ENCODE measurements at regions of chr9 and their contacts with region 1.

Region 1: GRCh38 chr9:90921111-90921510 is 119.5 kb downstream of the SYK start:
- DNase-seq: peak; percentile 80 to 93
- ATAC-seq: peak; percentile 85
- H3K4me3 ChIP-seq: no peak overlapping the region
- H3K27ac ChIP-seq: peak overlapping the region in 1 of 2 donors; percentile 90
- H3K4me1 ChIP-seq: peaks cover 3 to 5% of the 10 kb centered on the region in 2 donors
- H3K27me3 ChIP-seq: no peaks in the 10 kb centered on the region

Region 2: DNA sequence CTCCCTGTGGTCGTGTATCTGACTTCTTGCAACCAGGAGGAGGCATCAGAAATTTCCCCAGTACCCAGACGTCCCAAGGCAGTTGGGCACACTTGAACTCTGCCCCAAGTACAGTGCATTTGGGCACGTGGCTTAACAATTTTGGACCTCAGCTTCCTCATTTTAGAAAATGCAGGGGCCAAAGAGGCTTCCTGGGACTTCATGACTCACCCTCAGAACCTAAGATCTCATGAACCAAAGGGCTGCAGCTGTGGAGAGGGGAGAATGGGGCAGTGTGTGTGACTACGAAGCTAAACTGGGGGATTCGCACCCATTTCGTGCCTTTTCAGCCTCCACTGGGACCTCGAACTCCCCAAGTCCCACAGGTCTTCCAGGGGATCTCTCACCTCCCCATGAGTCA is 60.3 kb before region 1 on chr9:
- intact Hi-C with region 1: no loop called
- DNase-seq: peak in 1 of 2 donors; percentile 60
- ATAC-seq: no peak
- H3K4me3 ChIP-seq: no peak overlapping the region
- H3K27ac ChIP-seq: no peak overlapping the region
- H3K4me1 ChIP-seq: no peaks in the 10 kb centered on the region
- H3K27me3 ChIP-seq: no peaks in the 10 kb centered on the region

Region 3: DNA sequence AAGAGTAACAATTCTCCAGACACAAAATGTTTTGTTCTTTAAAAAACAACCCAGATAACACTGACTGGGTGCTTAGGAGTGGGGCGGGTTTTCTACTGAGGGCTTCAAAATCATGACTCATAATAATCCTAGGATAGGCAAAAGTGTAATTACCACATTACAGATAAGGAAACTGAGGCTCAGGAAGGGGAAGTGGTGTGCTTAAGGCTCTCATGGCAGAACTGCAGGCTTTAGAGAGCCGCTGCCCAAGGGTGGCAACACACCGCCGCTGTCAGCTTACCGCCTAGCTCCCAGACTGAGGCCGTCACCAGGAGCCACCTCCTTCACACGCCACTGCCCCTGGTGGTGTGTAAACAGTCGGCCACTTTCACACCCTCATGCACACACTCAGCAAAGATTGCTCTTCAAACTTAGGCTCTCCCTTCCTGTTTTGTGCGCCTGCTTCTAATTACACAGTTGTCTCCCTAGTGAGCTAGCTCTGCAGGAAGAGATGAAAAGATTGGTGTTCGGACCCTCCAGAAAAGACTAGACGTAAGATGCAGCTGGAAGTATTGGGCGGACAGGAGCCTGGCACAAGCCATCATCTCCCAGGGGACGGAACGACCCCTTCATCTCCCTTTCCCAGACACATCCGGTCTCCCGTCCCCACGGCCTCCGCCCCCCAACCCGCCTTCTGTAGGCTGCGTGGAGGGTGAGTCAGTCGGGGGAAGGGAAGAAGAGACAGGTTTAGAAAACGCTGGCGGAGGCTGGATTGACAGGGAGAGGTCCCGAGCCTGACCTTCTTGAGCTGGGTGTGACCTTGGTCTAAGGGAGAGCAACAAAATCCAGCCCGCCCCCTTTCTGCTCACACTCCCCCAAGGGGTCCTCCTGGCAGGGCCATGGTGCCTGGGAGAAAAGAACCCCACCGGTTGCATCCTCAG is 43.2 kb after region 1 on chr9:
- intact Hi-C with region 1: loop called (anchors 2 to 5 kb)
- DNase-seq: peak; percentile 65 to 83
- ATAC-seq: peak; percentile 77
- H3K4me3 ChIP-seq: peak overlapping the region; percentile 4 to 25
- H3K27ac ChIP-seq: peak overlapping the region; percentile 91 to 93
- H3K4me1 ChIP-seq: peaks cover 3 to 8% of the 10 kb centered on the region in 2 donors
- H3K27me3 ChIP-seq: no peaks in the 10 kb centered on the region

Measured in aorta (tissue), 5 donors.